ENCODE measurements at regions of chr12 and their contacts with region 1.

Region 1: DNA sequence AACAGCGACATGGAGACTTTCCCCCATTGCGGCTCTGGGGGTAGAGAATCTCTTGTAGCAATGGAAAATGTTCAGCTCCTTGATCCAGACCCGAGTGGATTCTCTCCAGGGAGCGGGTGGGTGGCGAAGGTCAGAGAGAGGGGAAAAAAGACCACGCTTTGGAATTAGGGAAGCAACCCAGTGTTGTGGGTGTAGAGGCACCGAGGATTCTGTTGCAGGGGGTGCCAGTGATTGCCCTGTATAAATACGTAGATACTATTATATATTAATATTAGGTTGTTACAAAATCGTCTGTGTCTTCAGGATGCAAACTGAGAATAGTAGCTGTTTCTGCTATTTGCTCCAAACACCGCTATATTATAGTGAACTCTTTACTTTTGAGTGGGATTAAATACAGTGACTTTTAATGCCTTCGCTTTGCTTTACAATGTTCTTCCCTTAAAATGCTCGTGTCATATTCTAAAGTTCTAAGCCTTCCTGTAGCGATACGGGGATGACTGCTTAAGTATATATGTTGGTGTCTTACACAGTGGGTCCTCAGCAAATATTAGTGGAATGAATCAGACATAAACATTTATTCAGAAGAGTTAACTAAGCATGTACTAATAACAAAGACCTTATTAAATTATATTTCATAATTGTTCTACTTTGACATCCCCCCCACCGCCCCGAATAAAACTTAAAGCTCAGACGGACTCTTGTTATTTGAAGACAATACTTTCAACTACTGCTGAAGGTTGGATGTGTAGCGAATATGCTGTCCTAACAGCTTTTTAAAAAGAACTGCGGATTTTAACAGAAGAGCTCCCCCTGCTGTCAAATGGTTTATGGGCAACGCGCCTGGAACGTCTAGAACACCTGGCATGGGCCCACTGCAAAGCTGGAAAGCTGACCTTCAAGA is 136.4 kb upstream of the KRAS start:
- DNase-seq: peak; percentile 73
- H3K4me3 Mint-ChIP-seq: peak overlapping the region; percentile 95
- H3K27ac Mint-ChIP-seq: peak overlapping the region; percentile 99
- H3K4me1 Mint-ChIP-seq: peaks cover 48% of the 10 kb centered on the region
- H3K27me3 Mint-ChIP-seq: peaks cover 6% of the 10 kb centered on the region

Region 2: DNA sequence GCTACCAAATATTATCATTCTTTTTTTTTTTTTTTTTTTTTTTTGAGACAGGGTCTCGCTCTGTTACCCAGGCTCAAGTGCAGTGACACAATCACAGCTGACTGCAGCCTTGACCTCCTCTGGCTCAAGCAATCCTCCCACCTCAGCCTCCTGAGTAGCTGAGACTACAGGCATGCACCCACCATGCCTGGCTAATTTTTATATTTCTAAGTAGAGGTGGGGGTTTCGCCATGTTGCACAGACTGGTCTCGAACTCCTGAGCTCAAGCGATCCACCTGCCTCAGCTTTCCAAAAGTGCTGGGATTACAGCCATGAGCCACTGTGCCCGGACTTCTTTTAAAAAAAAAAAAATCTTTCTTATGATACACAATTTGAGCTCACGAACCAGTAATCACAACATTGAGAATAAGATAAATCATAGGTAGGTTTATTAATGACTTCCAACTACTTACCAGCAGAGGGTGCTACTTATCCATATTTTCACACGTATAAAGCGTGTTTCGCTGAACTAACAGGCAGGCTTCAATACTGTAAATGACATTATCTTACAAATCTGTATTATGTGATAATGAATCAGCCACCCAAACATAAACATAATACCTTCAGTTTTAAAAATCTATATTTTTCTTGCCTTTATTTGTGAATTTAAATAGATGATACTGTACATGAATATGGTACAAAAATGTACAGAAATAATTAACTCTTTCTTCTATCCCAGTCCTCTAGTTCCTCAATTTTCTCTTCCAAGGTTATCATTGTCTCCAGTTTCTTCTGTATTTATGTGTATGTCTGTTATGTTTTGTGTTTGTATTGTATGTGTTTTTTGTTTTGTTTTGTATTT is 395.7 kb before region 1 on chr12:
- intact Hi-C with region 1: loop called (anchors 2 kb)
- DNase-seq: no peak
- H3K4me3 Mint-ChIP-seq: no peak overlapping the region
- H3K27ac Mint-ChIP-seq: no peak overlapping the region
- H3K4me1 Mint-ChIP-seq: no peaks in the 10 kb centered on the region
- H3K27me3 Mint-ChIP-seq: peaks cover 19% of the 10 kb centered on the region

Region 3: DNA sequence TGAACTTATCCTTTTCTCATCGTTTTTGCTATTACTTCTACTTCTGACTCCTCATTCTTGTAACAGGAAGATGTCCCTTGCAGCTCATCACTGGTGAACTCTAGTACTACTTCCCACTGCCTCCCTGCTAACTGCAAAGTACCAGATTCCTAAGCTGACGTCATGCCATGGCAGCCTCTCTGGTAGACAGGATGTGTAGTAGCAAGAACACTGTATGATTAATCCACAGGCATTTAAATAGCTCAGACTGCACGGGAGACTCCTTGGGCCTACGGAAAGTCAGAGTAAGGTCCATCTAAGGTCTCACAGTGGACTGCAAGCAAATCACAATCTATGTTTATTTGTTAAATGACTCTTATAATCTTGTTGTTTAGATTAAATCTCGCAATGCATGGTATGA is 235.6 kb before region 1 on chr12:
- intact Hi-C with region 1: loop called (anchors 1 kb)
- DNase-seq: no peak
- H3K4me3 Mint-ChIP-seq: no peak overlapping the region
- H3K27ac Mint-ChIP-seq: no peak overlapping the region
- H3K4me1 Mint-ChIP-seq: peaks cover 6% of the 10 kb centered on the region
- H3K27me3 Mint-ChIP-seq: peaks cover 6% of the 10 kb centered on the region

Region 4: DNA sequence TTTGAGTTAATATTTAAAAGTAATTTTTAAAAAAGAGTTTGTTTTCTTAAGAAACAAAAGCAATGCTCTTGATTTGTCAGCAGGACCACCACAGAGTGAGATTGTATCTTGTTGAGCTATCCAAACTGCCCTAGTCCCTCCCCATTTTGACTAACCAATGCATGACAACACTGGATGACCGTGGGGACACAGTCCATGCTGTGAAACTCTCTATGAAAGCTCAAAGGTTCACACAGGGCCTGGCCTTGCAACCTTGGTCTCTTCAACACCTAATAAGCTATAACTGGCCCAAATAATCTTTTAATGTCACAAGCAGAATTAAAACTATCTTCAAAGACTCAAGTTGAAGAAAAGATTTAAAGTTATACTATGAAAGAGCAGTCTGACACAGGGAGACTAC is 178.5 kb before region 1 on chr12:
- intact Hi-C with region 1: loop called (anchors 1 kb)
- DNase-seq: no peak
- H3K4me3 Mint-ChIP-seq: no peak overlapping the region
- H3K27ac Mint-ChIP-seq: no peak overlapping the region
- H3K4me1 Mint-ChIP-seq: peaks cover 5% of the 10 kb centered on the region
- H3K27me3 Mint-ChIP-seq: no peaks in the 10 kb centered on the region

Region 5: DNA sequence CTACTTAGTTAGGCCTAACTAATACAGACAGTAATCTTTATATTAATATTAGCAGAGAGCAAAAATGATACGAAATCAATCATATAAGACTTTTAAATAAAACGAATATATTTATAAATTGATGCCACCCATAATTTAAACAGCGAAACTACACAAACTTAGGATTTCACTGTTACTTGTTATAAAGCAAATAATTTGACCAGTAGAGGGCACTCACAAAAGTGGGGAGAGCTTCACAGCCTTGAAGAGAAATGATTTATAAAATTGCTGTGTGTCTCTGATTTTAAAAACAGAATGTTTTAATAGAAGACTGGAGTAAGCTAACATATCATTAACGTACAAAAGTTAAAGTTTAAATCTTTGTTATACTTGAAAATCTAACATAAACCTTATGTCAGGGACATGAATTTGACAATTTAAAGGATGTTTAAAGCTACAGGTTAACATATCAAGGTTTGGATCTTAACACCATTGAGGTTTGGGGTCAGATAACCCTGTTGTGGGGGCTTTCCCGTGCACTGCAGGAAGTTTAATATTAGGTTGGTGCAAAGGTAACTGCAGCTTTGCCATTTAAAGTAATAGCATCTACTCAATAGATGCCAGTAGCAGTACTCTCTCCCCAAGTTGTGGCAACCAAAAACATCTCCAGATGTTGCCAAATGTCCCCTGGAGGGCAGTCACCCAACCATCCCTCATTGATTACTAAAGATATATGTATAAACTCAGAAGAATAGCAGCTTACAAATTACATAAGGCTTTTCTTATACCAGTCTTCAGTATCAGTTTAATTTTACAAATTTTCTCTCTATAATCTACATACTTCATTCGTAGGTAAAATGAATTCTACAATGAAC is 145.7 kb before region 1 on chr12:
- intact Hi-C with region 1: loop called (anchors 1 kb)
- DNase-seq: no peak
- H3K4me3 Mint-ChIP-seq: no peak overlapping the region
- H3K27ac Mint-ChIP-seq: no peak overlapping the region
- H3K4me1 Mint-ChIP-seq: peaks cover 33% of the 10 kb centered on the region
- H3K27me3 Mint-ChIP-seq: no peaks in the 10 kb centered on the region

Region 6: GRCh38 chr12:25328072-25328712 is 58.9 kb before region 1 on chr12:
- intact Hi-C with region 1: loop called (anchors 1 kb)
- DNase-seq: no peak
- H3K4me3 Mint-ChIP-seq: no peak overlapping the region
- H3K27ac Mint-ChIP-seq: no peak overlapping the region
- H3K4me1 Mint-ChIP-seq: peaks cover 20% of the 10 kb centered on the region
- H3K27me3 Mint-ChIP-seq: peaks cover 40% of the 10 kb centered on the region

Region 7: DNA sequence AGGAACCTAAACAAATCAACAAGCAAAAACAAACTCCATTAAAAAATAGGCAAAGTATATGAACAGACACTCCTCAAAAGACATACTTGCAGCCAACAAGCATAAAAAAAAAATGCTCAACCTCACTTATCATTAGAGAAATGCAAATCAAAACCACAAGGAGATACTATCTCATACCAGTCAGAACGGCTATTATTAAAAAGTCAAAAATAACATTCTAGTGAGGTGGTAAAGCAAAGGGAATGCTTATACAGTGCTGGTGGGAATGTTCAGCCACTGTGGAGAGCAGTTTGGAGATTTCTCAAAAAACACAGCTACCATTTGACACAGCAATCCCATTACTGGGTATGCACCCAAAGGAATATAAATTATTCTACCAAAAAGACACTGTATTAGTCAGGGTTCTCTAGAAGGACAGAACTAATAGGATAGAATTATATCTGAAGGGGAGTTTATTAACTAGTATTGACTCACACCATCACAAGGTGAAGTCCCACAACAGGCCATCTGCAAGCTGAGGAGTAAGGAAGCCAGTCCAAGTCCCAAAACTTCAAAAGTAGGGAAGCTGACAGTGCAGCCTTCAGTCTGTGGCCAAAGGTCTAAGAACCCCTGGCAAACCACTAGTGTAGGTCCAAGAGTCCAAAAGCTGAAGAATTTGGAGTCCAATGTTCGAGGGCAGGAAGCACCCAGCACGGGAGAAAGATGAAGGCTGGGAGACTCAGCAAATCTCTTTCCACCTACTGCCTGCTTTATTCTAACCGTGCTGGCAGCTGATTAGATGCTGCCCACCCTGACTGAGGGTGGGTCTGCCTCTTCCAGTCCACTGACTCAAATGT is 34.8 kb before region 1 on chr12:
- intact Hi-C with region 1: loop called (anchors 1 kb)
- DNase-seq: no peak
- H3K4me3 Mint-ChIP-seq: no peak overlapping the region
- H3K27ac Mint-ChIP-seq: no peak overlapping the region
- H3K4me1 Mint-ChIP-seq: peaks cover 25% of the 10 kb centered on the region
- H3K27me3 Mint-ChIP-seq: peaks cover 19% of the 10 kb centered on the region

Region 8: DNA sequence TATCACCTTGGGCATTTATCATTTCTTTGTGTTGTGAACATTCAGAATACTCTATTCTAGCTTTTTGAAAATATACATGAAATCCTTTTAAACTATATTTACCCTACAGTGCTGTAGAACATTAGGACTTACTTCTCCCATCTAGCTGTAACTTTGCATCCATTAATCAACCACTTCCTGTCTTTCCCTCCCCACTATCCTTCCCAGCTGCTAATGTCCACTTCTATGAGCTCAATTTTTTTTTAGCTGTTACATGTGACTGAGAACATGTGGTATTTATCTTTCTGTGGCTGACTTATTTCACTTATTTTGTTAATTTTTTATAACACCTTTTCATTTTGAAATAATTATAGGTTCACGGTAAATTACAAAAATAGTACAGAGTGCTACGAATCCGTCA is 30.0 kb after region 1 on chr12:
- intact Hi-C with region 1: no loop called
- DNase-seq: no peak
- H3K4me3 Mint-ChIP-seq: no peak overlapping the region
- H3K27ac Mint-ChIP-seq: no peak overlapping the region
- H3K4me1 Mint-ChIP-seq: no peaks in the 10 kb centered on the region
- H3K27me3 Mint-ChIP-seq: peaks cover 45% of the 10 kb centered on the region

Region 9: GRCh38 chr12:25447046-25447445 is 60.0 kb after region 1 on chr12:
- intact Hi-C with region 1: no loop called
- DNase-seq: no peak
- H3K4me3 Mint-ChIP-seq: no peak overlapping the region
- H3K27ac Mint-ChIP-seq: no peak overlapping the region
- H3K4me1 Mint-ChIP-seq: no peaks in the 10 kb centered on the region
- H3K27me3 Mint-ChIP-seq: peaks cover 23% of the 10 kb centered on the region

Measured in activated T-helper 2 cell treated with anti-CD3 and anti-CD28 coated beads, Interferon-gamma antibody, Interleukin-2, Interleukin-4, amounts not matched to agents 10 μg/mL and 5 μg/mL and 100 μg/mL, durations not matched to agents 14 hours and 24 hours and 36 hours (primary cell).